Natural killer cell (primary cell): ENCODE measurements at regions of chr18 and their contacts with region 1.

Region 1: GRCh38 chr18:36284671-36285295 is 12.7 kb upstream of the FHOD3 start:
- DNase-seq: peak in 1 of 2 donors; percentile 82
- ATAC-seq: peak; percentile 40 to 63 (median 61)
- H3K4me3 ChIP-seq: no peak overlapping the region
- H3K4me3 Mint-ChIP-seq: no peak overlapping the region
- H3K27ac ChIP-seq: no peak overlapping the region
- H3K27ac Mint-ChIP-seq: no peak overlapping the region
- H3K4me1 ChIP-seq: no peaks in the 10 kb centered on the region
- H3K4me1 Mint-ChIP-seq: peaks cover 0 to 4% of the 10 kb centered on the region in 2 donors
- H3K27me3 ChIP-seq: peaks cover 4% of the 10 kb centered on the region
- H3K27me3 Mint-ChIP-seq: peaks cover 22 to 41% of the 10 kb centered on the region in 2 donors
- CTCF ChIP-seq: peak; percentile 80

Region 2: DNA sequence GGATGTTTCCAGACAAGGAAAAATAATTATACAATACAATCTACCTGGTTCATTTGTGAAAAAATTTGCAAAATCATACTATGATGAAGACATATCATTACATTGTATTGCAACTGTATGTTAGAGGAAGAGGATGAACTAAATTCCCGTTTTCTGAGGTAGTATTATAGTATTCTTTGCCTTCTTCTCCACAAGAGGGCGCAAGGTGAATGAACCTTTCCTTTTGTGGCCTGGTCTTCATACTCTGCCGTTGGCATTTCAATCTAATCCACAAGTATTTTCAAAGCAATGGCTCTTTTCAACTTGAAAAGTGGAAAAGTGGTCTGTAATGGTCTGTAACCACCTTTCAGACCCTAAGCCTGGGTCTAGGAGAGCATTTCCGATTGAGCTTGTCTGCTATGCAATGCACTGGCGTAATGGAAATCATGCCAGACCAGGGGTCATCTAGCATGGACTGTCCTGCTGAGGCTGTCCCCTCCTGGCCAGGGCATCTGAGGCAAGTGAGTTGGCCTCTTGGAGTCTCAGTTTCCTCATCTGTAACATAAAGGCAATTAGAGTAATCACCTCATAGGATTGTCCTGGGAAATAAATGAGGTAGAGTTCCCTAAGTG is 876.8 kb before region 1 on chr18:
- intact Hi-C with region 1: loop called (anchors 5 kb)
- DNase-seq: peak in 1 of 2 donors; percentile 79
- ATAC-seq: peak; percentile 79 to 88 (median 84)
- H3K4me3 ChIP-seq: no peak overlapping the region
- H3K4me3 Mint-ChIP-seq: no peak overlapping the region
- H3K27ac ChIP-seq: no peak overlapping the region
- H3K27ac Mint-ChIP-seq: no peak overlapping the region
- H3K4me1 ChIP-seq: peaks cover 17% of the 10 kb centered on the region
- H3K4me1 Mint-ChIP-seq: peaks cover 5 to 8% of the 10 kb centered on the region in 2 donors
- H3K27me3 ChIP-seq: no peaks in the 10 kb centered on the region
- H3K27me3 Mint-ChIP-seq: peaks cover 9 to 15% of the 10 kb centered on the region in 2 donors
- CTCF ChIP-seq: peak; percentile 89

Region 3: DNA sequence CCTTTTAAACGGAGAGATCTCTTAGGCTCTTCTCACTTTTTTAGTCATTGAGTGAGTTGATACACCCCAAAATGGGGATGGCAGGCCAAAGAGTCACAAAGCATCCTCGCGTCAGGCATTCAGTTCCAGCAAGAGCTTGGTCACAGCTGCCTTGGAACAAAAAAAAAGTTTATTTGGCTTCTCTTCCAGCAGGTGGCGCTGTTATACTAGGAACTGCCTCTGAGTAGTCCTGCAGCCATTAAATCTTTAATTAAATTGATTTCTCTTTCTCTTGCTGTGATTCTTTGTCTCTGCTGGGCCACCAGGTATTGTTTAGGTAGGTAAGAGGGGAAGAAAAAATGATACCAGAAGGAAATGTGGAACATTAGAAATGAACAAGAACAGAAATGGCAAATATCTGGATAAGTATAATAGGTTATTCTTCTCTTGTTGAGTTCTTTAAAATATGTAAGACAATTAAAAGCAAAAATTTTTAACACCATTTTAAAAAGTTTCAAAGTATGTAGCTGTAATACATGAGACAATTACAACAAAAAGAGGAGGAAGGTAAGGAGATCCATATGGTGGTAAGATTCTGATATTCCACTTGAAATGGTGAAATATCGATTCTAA is 528.2 kb before region 1 on chr18:
- intact Hi-C with region 1: loop called (anchors 1 kb)
- DNase-seq: peak in 1 of 2 donors; percentile 71
- ATAC-seq: peak; percentile 61 to 78 (median 69)
- H3K4me3 ChIP-seq: no peak overlapping the region
- H3K4me3 Mint-ChIP-seq: no peak overlapping the region
- H3K27ac ChIP-seq: no peak overlapping the region
- H3K27ac Mint-ChIP-seq: no peak overlapping the region
- H3K4me1 ChIP-seq: no peaks in the 10 kb centered on the region
- H3K4me1 Mint-ChIP-seq: no peaks in the 10 kb centered on the region
- H3K27me3 ChIP-seq: no peaks in the 10 kb centered on the region
- H3K27me3 Mint-ChIP-seq: peaks cover 20 to 32% of the 10 kb centered on the region in 2 donors
- CTCF ChIP-seq: peak; percentile 92

Region 4: DNA sequence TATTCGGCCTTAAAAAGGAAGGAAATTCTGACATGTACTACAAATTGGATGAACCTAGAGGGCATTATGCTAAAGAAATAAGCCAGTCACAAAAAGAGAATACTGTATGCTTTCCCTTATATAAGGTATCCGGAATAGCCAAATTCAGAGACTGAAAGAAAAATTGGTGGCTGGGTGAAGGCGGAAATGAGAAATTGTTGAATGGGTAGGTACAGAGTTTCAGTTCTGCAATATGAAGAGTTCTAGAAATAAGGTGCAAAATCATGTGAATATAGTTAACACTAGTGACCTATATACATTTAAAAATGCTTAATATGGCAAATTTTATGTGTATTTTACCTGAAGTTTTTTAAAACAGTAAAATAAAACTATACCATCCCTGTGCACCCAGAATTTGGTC is 269.2 kb before region 1 on chr18:
- intact Hi-C with region 1: loop called (anchors 1 kb)
- DNase-seq: no peak
- ATAC-seq: no peak
- H3K4me3 ChIP-seq: no peak overlapping the region
- H3K4me3 Mint-ChIP-seq: no peak overlapping the region
- H3K27ac ChIP-seq: no peak overlapping the region
- H3K27ac Mint-ChIP-seq: no peak overlapping the region
- H3K4me1 ChIP-seq: no peaks in the 10 kb centered on the region
- H3K4me1 Mint-ChIP-seq: no peaks in the 10 kb centered on the region
- H3K27me3 ChIP-seq: no peaks in the 10 kb centered on the region
- H3K27me3 Mint-ChIP-seq: no peaks in the 10 kb centered on the region
- CTCF ChIP-seq: no peak

Region 5: GRCh38 chr18:36095936-36096519 is 188.8 kb before region 1 on chr18:
- intact Hi-C with region 1: loop called (anchors 1 kb)
- DNase-seq: peak in 1 of 2 donors; percentile 71
- ATAC-seq: peak in 2 of 3 donors; percentile 59 to 65
- H3K4me3 ChIP-seq: no peak overlapping the region
- H3K4me3 Mint-ChIP-seq: no peak overlapping the region
- H3K27ac ChIP-seq: no peak overlapping the region
- H3K27ac Mint-ChIP-seq: no peak overlapping the region
- H3K4me1 ChIP-seq: peaks cover 6% of the 10 kb centered on the region
- H3K4me1 Mint-ChIP-seq: peaks cover 11 to 12% of the 10 kb centered on the region in 2 donors
- H3K27me3 ChIP-seq: no peaks in the 10 kb centered on the region
- H3K27me3 Mint-ChIP-seq: peaks cover 7 to 17% of the 10 kb centered on the region in 2 donors
- CTCF ChIP-seq: peak; percentile 70

Region 6: GRCh38 chr18:36372903-36373311 is 88.1 kb after region 1 on chr18:
- intact Hi-C with region 1: no loop called
- DNase-seq: no peak
- ATAC-seq: no peak
- H3K4me3 ChIP-seq: no peak overlapping the region
- H3K4me3 Mint-ChIP-seq: no peak overlapping the region
- H3K27ac ChIP-seq: no peak overlapping the region
- H3K27ac Mint-ChIP-seq: no peak overlapping the region
- H3K4me1 ChIP-seq: no peaks in the 10 kb centered on the region
- H3K4me1 Mint-ChIP-seq: no peaks in the 10 kb centered on the region
- H3K27me3 ChIP-seq: no peaks in the 10 kb centered on the region
- H3K27me3 Mint-ChIP-seq: peaks cover 22 to 41% of the 10 kb centered on the region in 2 donors
- CTCF ChIP-seq: no peak

Region 7: DNA sequence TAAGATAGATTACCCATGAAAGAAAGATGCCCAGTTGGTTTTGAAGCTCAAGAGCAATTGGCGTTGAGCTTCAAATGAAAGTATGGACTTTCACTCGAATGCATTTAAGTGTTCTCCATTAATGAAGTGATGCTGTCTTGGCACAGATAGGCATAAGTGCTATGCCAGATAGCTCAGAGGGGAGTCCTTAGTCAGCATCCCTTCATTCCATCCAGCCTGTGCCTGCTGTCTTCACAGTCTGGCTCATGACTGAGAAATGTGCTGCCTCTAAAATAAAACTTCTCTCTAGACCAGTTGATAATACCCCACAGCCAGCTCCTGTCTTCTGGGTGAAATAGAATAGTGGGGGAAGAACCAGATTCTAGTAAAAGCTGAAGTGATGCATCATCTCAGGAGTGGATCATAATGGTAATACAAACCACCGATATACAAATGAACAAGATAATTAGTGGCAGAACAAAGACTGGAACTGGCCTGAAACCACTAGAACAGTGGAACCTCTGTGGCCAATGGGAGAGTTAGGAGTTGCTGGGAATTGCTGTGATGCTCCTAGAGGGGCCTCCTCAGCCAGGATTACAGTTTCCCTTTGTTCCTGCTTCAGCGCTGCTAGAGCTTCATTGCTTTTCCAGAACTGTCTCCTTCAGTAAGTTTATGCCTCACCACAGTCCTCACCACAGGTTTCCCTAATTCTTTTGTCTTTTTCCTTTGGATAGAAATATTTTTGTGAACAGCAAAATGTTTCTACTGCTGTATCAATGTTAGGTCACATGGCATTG is 903.4 kb after region 1 on chr18:
- intact Hi-C with region 1: no loop called
- DNase-seq: no peak
- ATAC-seq: no peak
- H3K4me3 ChIP-seq: no peak overlapping the region
- H3K4me3 Mint-ChIP-seq: no peak overlapping the region
- H3K27ac ChIP-seq: no peak overlapping the region
- H3K27ac Mint-ChIP-seq: no peak overlapping the region
- H3K4me1 ChIP-seq: no peaks in the 10 kb centered on the region
- H3K4me1 Mint-ChIP-seq: no peaks in the 10 kb centered on the region
- H3K27me3 ChIP-seq: no peaks in the 10 kb centered on the region
- H3K27me3 Mint-ChIP-seq: no peaks in the 10 kb centered on the region
- CTCF ChIP-seq: no peak